ENCODE measurements at regions of chr7 and their contacts with region 1.

Region 1: DNA sequence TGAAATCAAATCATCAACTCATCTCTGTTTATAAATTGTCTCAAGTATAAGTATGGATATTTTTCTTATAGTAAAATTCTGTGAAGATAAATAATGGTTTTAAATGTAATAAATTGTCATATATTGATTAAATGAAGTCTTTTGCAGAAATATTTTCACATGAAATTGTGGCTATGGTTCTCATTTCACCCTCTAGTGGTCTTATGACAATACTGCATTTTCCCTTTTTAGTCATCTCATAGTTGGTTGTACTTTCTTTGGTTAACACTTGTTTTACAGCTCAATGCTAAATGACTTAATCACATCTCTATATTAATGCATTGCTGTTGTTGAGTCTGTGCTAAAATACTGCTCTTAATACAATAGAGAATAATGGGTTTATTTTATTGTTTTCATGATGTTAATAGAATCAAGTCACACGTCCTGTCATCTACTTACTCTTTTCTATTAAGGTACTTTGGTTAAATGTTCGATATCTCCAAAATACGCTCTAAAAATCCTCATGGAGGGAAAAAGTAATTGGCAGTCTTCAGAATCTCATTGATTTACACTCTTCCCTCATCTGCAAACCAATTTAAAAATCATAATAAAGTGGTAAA is 38.0 kb upstream of the CACNA2D1 start:
- DNase-seq: no peak
- ATAC-seq: no peak
- H3K4me3 ChIP-seq: no peak overlapping the region
- H3K27ac ChIP-seq: no peak overlapping the region
- H3K4me1 ChIP-seq: peaks cover 0 to 5% (median 0%) of the 10 kb centered on the region in 12 donors
- H3K27me3 ChIP-seq: no peaks in the 10 kb centered on the region
- CTCF ChIP-seq: peak; percentile 61 to 84 (median 73)
- POLR2A ChIP-seq: no peak

Region 2: DNA sequence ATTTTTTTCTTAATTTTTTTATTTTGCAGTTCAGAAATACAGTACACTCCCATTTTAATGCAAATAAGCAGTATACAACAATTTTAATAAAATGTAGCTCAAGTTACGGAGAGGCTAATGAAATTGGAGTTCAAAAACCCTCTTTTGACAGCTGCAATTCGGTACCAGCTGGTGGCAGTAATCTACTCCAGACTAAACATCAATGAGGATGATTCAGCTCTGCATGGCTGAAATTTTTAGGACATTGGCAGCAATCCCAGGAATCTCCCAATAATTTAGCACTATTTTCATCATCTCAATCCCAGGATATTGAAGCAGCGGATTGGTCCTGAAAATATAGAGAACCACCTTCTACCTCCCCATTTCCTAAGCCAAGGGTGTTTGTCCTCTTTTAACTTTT is 316.8 kb before region 1 on chr7:
- intact Hi-C with region 1: loop called in 1 of 10 experiments (anchors 10 kb)
- DNase-seq: peak in 4 of 5 donors; percentile 15 to 35 (median 26)
- ATAC-seq: peak; percentile 45 to 86 (median 68)
- H3K4me3 ChIP-seq: no peak overlapping the region
- H3K27ac ChIP-seq: no peak overlapping the region
- H3K4me1 ChIP-seq: peaks cover 0 to 16% (median 7%) of the 10 kb centered on the region in 12 donors
- H3K27me3 ChIP-seq: no peaks in the 10 kb centered on the region
- CTCF ChIP-seq: peak in 10 of 12 donors; percentile 3 to 55 (median 34)
- POLR2A ChIP-seq: no peak

Region 3: DNA sequence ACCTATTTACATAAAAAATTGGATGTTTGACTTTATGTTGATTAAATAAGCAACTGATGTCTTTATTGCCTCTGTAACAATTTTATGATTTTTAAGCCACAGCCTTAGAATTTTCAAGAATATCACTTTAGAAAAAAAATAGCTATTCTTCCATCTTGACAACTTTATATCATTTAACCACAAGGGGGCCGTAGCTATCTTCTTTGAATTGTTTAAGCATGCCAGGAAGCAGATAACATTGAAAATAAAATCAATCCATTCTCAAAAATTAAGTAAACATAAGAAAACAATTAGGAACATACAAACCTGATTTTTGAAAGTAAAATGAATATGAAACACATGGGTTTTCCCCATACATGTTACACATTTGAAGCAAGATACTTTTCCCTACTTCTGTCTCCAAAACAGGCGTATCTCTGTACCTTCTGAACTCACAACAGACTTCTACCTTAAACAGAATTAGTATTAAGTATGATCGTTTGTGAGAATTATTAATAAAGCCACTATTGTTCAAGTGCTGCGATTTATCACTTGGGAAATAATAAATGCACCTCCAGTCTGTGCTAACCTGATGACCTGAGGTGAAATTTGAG is 247.0 kb before region 1 on chr7:
- intact Hi-C with region 1: loop called in 8 of 10 experiments (anchors 2 to 10 kb)
- DNase-seq: no peak
- ATAC-seq: peak in 1 of 4 donors; percentile 55
- H3K4me3 ChIP-seq: no peak overlapping the region
- H3K27ac ChIP-seq: no peak overlapping the region
- H3K4me1 ChIP-seq: peaks cover 0 to 23% (median 6%) of the 10 kb centered on the region in 12 donors
- H3K27me3 ChIP-seq: no peaks in the 10 kb centered on the region
- CTCF ChIP-seq: peak; percentile 37 to 74 (median 60)
- POLR2A ChIP-seq: no peak

Region 4: GRCh38 chr7:82605247-82605872 is 123.8 kb after region 1 on chr7:
- intact Hi-C with region 1: no loop called
- DNase-seq: no peak
- ATAC-seq: no peak
- H3K4me3 ChIP-seq: no peak overlapping the region
- H3K27ac ChIP-seq: no peak overlapping the region
- H3K4me1 ChIP-seq: no peaks in the 10 kb centered on the region
- H3K27me3 ChIP-seq: no peaks in the 10 kb centered on the region
- CTCF ChIP-seq: peak; percentile 50 to 82 (median 68)
- POLR2A ChIP-seq: no peak

Measured in heart left ventricle (tissue), 16 donors.